ENCODE measurements at regions of chr3 and their contacts with region 1.

Region 1: GRCh38 chr3:38247366-38248035 is 18.1 kb upstream of the SLC22A13 start:
- DNase-seq: peak; percentile 95
- ATAC-seq: peak; percentile 99
- H3K4me3 ChIP-seq: no peak overlapping the region
- H3K27ac ChIP-seq: peak overlapping the region; percentile 22; the same call in 1 of the 2 replicates
- H3K4me1 ChIP-seq: peaks cover 11% of the 10 kb centered on the region
- H3K27me3 ChIP-seq: no peaks in the 10 kb centered on the region
- CTCF ChIP-seq: peak; percentile 57

Region 2: DNA sequence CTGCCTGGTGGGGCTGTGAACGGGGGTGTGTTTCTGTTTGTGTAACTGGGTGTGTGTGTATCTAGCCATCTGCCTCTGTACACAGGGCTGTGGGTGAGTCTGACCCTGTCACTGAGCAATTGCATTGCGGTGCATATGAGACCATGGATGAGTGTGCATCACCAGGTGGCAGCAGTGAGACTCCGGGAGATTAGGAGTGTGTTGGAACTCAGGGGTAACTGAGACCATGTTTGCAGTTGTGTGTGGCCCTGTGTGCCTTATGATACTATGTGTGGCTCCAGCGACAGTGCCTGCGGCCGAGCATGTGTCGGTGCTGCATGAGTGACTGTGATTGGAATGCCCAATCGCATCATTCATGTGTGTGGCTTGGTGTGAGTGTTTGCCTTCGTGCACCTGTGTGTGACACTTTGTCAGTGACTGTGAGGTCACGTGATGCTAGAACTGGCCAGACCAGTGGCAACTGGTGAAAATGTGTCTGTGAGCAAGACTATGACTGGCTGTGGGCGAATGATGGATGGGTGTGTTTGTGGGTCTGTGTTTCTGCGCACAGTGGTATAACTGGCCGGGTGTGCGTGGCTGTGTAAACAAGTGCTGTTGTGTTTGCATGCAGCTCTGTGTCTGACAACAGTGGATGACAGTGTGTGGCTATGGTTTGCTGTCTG is 243.0 kb before region 1 on chr3:
- CTCF ChIA-PET with region 1: no interaction called
- POLR2A ChIA-PET with region 1: no interaction called
- intact Hi-C with region 1: no loop called
- DNase-seq: peak; percentile 94
- ATAC-seq: peak; percentile 80
- H3K4me3 ChIP-seq: no peak overlapping the region; the same call in 1 of the 2 replicates
- H3K27ac ChIP-seq: peak overlapping the region; percentile 80
- H3K4me1 ChIP-seq: peaks cover 27% of the 10 kb centered on the region
- H3K27me3 ChIP-seq: no peaks in the 10 kb centered on the region
- CTCF ChIP-seq: peak; percentile 94

Region 3: DNA sequence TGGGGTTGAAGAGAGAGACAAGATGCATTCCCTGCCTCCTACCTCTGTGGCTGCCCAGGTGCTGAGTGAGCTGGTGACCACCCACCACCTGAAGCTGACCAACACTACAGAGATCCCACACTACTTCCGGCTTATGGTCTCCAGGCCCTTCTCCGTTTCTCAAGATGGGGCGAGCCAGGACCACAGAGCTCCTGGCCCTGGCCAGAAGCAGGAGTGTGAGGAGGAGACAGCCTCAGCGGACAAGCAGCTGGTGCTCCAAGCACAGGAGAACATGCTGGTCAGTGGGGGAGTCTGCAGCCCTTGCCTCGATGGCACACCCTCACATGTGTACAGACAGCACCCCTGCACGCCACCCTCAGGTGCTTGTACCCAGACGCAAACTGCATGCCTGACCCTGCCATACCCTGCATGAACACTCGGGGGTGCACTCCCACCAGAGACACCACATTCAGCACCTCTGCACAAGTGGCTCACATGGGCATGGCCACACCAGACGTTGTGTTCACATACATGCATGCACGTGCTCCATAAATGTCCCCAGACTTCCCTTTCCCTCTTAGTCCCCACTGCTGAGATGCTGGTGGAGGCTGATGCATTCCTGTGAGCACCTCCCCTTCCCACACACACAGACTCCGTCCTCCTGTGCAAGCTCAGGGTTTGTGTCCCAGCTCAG is 129.6 kb before region 1 on chr3:
- CTCF ChIA-PET with region 1: interaction called, 3 read pairs
- POLR2A ChIA-PET with region 1: no interaction called
- intact Hi-C with region 1: loop called (anchors 1 kb)
- DNase-seq: peak; percentile 74
- ATAC-seq: peak; percentile 64
- H3K4me3 ChIP-seq: no peak overlapping the region
- H3K27ac ChIP-seq: no peak overlapping the region
- H3K4me1 ChIP-seq: peaks cover 6% of the 10 kb centered on the region; the same call in 1 of the 2 replicates
- H3K27me3 ChIP-seq: no peaks in the 10 kb centered on the region
- CTCF ChIP-seq: peak; percentile 87

Region 4: GRCh38 chr3:38136777-38137614 is 110.5 kb before region 1 on chr3 and contains the start of gene ACAA1:
- CTCF ChIA-PET with region 1: interaction called, 3 read pairs
- POLR2A ChIA-PET with region 1: no interaction called
- intact Hi-C with region 1: loop called (anchors 1 kb)
- DNase-seq: peak; percentile 99
- ATAC-seq: peak; percentile 80
- H3K4me3 ChIP-seq: peak within 1 kb of the TSS; percentile 93
- H3K27ac ChIP-seq: peak within 1 kb of the TSS; percentile 95
- H3K4me1 ChIP-seq: peaks cover 76% of the 10 kb centered on the region
- H3K27me3 ChIP-seq: no peaks in the 10 kb centered on the region
- CTCF ChIP-seq: no peak
- total RNA-seq, gene ACAA1: 76.4 and 94.5 TPM in 2 replicates

Region 5: DNA sequence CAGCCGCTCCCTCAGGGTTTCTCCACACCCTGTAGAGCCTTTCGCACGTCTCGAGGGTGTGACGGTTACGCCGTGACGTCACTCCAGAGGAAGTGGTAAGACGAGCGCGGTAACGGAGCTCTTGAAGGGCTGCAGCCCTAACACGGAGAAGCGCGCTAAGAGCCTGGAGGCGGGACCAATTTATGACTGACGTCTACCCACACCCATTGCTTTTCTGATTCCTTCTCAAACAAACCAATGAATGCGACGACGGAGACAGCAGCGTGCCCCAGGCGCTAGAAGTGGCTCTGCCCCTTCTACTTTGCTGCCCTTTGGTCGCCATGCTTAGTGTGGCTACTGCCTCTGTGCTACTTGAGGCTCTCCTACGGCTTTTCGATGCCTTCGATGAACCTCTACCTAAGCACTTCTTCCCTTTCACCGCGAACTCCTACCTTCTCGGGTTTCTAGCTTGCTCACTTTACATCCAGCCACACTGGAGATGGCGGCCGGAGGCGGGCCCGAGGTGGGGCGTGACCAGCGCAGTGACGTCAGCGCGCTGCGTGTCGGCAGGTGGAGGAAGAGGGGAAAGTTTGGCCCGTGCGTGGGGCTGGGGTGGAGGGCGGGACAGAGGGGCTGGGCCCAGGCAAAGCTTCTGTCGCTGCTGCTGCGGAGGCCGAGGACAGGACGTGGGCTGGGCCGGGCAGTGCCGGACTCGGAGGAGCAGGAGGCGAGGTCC is 82.4 kb before region 1 on chr3 and contains the start of gene OXSR1:
- CTCF ChIA-PET with region 1: interaction called, 3 read pairs
- POLR2A ChIA-PET with region 1: no interaction called
- intact Hi-C with region 1: loop called (anchors 1 kb)
- DNase-seq: peak; percentile 100
- ATAC-seq: peak; percentile 84
- H3K4me3 ChIP-seq: peak within 1 kb of the TSS; percentile 94
- H3K27ac ChIP-seq: peak within 1 kb of the TSS; percentile 97
- H3K4me1 ChIP-seq: peaks cover 44% of the 10 kb centered on the region
- H3K27me3 ChIP-seq: no peaks in the 10 kb centered on the region
- CTCF ChIP-seq: no peak
- total RNA-seq, gene OXSR1: 42.2 and 47.7 TPM in 2 replicates

Region 6: DNA sequence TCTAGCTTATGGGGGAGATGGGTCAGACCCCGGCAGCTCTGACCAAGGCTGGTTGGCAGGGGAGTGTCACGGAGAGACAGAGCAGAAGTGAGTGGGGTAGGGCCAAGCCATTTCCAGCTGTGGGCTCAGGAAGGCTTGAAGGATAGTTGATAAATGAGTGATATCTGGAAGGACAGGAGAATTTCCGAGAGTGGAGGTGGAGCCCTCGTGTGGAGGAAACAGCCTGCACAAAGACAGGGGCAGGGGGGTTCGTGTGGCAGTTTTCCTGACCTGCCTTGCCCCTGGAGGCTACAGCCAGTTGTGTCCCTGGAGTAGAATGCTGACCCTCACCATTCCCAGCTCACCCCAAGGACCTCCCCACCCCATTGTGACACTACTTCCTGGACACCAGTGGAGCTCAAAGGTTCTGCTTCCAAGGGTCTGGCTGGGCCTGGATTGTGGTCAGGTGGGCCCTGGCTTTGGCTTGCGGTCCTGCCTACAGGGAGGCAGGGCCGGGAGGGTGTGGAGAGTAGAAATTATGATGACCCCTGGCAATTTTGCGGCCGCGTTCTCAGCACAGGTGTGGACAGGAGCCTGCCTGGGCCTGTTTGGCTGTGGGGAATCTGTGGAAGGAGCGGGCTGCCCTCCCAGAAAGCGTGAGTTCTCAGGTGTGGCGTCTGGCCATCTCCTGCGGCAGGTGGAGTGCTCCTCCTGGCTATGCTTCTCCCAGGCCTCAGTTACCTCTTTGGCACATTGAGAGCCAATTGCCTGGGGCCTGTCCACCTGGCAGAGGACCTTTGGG is 34.6 kb after region 1 on chr3 and contains the start of gene SLC22A14:
- CTCF ChIA-PET with region 1: no interaction called
- POLR2A ChIA-PET with region 1: no interaction called
- intact Hi-C with region 1: no loop called
- DNase-seq: peak; percentile 19
- ATAC-seq: peak; percentile 42; the same call in 1 of the 2 replicates
- H3K4me3 ChIP-seq: no peak within 1 kb of the TSS
- H3K27ac ChIP-seq: no peak within 1 kb of the TSS
- H3K4me1 ChIP-seq: no peaks in the 10 kb centered on the region
- H3K27me3 ChIP-seq: no peaks in the 10 kb centered on the region
- CTCF ChIP-seq: peak; percentile 46
- total RNA-seq, gene SLC22A14: 0.07 TPM in 1 of 2 replicates, not detected in the other

Region 7: DNA sequence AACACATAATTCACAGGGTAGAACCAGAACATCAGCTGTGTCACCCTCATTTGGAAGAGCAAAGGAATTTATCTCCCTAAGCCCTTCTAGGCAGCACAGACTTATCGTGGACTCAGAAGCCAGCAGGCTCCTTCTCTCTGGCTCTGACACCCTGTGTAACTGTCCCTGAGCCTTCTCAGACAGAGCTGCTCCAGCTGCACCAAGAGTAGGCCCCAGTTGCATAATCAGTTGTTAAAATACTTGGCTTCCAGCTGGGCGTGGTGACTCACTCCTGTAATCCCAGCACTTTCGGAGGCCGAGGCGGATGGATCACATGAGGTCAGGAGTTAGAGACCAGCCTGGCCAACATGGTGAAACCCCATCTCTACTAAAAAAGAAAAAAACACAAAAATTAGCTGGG is 156.8 kb after region 1 on chr3:
- CTCF ChIA-PET with region 1: no interaction called
- POLR2A ChIA-PET with region 1: no interaction called
- intact Hi-C with region 1: no loop called
- DNase-seq: peak; percentile 57
- ATAC-seq: peak; percentile 24; the same call in 1 of the 2 replicates
- H3K4me3 ChIP-seq: no peak overlapping the region
- H3K27ac ChIP-seq: no peak overlapping the region
- H3K4me1 ChIP-seq: no peaks in the 10 kb centered on the region
- H3K27me3 ChIP-seq: no peaks in the 10 kb centered on the region
- CTCF ChIP-seq: no peak

Region 8: DNA sequence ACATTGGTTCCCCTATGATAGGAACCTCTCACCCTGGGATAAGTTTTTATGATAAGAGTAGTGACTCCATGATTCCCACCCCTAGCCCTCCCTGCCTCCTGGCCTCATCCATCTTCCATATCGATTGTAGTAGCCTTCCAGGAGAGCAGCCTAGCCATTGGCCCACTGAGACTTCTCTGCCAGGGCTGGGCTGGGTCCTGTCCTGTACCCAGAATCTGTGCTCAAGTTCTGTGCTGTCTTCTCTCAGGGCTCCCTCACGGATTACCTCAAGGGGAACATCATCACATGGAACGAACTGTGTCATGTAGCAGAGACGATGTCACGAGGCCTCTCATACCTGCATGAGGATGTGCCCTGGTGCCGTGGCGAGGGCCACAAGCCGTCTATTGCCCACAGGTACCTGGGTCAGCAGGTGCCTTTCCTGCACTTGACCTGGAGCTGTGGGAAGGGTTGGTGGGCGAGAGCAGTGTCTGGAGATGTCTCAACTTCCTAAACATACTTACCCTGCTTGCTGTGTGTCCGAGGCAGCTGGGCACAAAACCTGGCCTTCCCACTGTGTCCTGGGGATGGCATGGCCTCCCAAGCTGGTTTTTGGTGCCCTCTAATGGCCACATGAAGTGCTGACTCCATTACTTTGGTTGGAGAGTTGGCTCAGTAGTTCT is 232.1 kb after region 1 on chr3:
- CTCF ChIA-PET with region 1: no interaction called
- POLR2A ChIA-PET with region 1: no interaction called
- intact Hi-C with region 1: loop called (anchors 1 kb)
- DNase-seq: peak; percentile 76
- ATAC-seq: peak; percentile 96
- H3K4me3 ChIP-seq: no peak overlapping the region
- H3K27ac ChIP-seq: no peak overlapping the region
- H3K4me1 ChIP-seq: no peaks in the 10 kb centered on the region
- H3K27me3 ChIP-seq: no peaks in the 10 kb centered on the region
- CTCF ChIP-seq: peak; percentile 93

Measured in PC-3 (cell line).